ENCODE measurements at regions of chr2 and their contacts with region 1.

Region 1: GRCh38 chr2:25521665-25522387 is 151.6 kb downstream of the DTNB start:
- DNase-seq: no peak
- H3K4me3 ChIP-seq: peak overlapping the region; percentile 30 to 43 (median 36)
- H3K27ac ChIP-seq: no peak overlapping the region
- H3K4me1 ChIP-seq: peaks cover 0 to 9% (median 8%) of the 10 kb centered on the region in 4 donors
- H3K27me3 ChIP-seq: no peaks in the 10 kb centered on the region
- CTCF ChIP-seq: peak; percentile 79 to 82 (median 80)
- EP300 ChIP-seq: no peak
- POLR2A ChIP-seq: no peak

Region 2: GRCh38 chr2:25276569-25277465 is 245.0 kb before region 1 on chr2:
- intact Hi-C with region 1: loop called (anchors 10 kb)
- DNase-seq: no peak
- H3K4me3 ChIP-seq: peak overlapping the region; percentile 53 to 58 (median 56)
- H3K27ac ChIP-seq: peak overlapping the region; percentile 80 to 87 (median 84)
- H3K4me1 ChIP-seq: peaks cover 45 to 79% (median 77%) of the 10 kb centered on the region in 4 donors
- H3K27me3 ChIP-seq: no peaks in the 10 kb centered on the region
- CTCF ChIP-seq: peak; percentile 85 to 98 (median 88)
- EP300 ChIP-seq: no peak
- POLR2A ChIP-seq: no peak

Region 3: DNA sequence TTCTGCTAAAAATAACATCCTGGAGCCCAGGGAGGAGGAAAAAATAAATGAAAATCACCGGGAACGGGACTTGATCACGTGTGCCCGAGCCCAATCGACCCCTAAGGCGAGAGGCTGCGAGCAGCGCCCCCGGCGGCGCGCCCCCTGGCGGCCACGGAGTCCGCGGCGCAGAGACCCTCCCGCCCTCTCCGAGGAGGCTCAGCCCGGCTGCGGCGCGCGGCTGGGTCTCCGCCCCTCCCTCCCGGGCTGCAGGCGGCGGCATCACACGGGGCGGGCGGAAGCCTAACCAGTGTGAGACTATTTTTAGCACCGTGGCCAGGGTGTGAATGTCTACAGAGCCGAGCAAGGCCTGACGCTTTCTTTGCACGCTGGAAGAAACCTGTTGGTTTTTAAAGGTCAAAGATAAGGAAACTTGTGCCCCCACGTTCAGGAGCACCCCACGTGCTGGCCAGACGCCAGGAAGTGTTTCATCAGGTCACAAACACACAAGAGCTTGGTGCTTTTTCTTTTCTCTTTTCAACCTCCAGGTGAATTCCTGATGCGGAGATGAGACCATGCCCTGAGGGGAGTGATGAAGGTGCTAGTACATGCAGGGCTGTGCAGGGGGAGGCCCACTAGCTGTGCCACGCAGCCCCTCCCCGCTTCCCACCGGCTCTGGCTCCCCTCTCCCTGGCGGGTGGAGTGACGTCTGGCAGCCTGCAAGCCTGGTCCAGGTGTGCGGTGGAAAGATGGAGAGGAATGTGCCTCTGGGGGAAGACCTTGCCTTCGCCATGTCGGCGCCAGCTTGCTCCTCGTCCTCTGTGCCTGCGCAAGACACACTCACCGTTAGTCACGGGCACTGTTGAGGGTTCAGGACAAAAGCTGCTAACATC is 144.8 kb before region 1 on chr2:
- intact Hi-C with region 1: loop called (anchors 5 kb)
- DNase-seq: peak; percentile 94
- H3K4me3 ChIP-seq: peak overlapping the region; percentile 22 to 49 (median 40)
- H3K27ac ChIP-seq: peak overlapping the region; percentile 50 to 68 (median 58)
- H3K4me1 ChIP-seq: peaks cover 12 to 26% (median 23%) of the 10 kb centered on the region in 4 donors
- H3K27me3 ChIP-seq: no peaks in the 10 kb centered on the region
- CTCF ChIP-seq: peak; percentile 93 to 96 (median 95)
- EP300 ChIP-seq: no peak
- POLR2A ChIP-seq: no peak